Common myeloid progenitor, CD34-positive (primary cell): ENCODE measurements at regions of chr1 and their contacts with region 1.

Region 1: DNA sequence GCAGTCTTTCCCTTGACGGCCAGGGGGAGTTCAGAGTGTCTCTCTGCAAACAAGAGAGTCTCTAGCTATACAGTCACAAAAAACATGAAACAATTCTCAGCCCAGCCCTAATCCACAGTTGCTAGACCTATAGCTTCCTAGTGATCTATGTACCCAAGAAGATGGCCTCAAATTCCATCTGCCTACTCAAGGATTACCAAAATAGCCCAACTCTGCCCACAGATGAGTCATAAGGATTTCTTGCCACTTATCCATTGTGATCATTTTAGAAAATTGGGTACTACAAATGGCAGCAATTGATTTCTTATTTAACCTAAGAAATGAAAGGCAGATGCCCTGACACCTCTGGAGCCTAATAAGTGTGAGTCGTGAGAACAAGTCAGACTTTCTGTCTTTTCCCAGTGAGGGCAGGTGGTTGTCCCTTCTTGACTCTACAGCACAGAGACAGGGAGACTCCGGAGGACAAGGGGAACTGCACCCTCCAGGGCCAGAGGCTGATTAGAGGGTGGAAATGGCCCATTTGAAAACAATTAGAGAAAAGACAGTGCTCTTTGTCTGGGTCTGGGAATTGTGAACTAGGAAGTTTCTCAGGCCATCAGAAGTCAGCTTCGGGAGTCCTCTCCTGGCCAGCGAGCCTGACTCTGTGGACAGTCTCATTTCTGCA is 65.4 kb downstream of the ABCA4 start:
- DNase-seq: no peak
- H3K4me3 ChIP-seq: no peak overlapping the region
- H3K27ac ChIP-seq: no peak overlapping the region
- H3K4me1 ChIP-seq: no peaks in the 10 kb centered on the region
- H3K27me3 ChIP-seq: peaks cover 0 to 24% (median 7%) of the 10 kb centered on the region in 5 experiments

Region 2: GRCh38 chr1:94045465-94046056 is 10.0 kb before region 1 on chr1:
- CTCF ChIA-PET with region 1: interaction called, 92 read pairs
- POLR2A ChIA-PET with region 1: no interaction called
- DNase-seq: peak; percentile 58 to 70 (median 68)
- H3K4me3 ChIP-seq: peak overlapping the region in 6 of 7 experiments; percentile 16 to 73 (median 48)
- H3K27ac ChIP-seq: no peak overlapping the region
- H3K4me1 ChIP-seq: peaks cover 0 to 16% (median 8%) of the 10 kb centered on the region in 4 experiments
- H3K27me3 ChIP-seq: peaks cover 0 to 5% (median 0%) of the 10 kb centered on the region in 5 experiments

Region 3: GRCh38 chr1:94125551-94126514 is 70.2 kb after region 1 on chr1:
- CTCF ChIA-PET with region 1: no interaction called
- POLR2A ChIA-PET with region 1: no interaction called
- DNase-seq: no peak
- H3K4me3 ChIP-seq: no peak overlapping the region
- H3K27ac ChIP-seq: no peak overlapping the region
- H3K4me1 ChIP-seq: no peaks in the 10 kb centered on the region
- H3K27me3 ChIP-seq: peaks cover 0 to 7% (median 0%) of the 10 kb centered on the region in 5 experiments